ENCODE measurements at regions of chr1 and their contacts with region 1.

Region 1: DNA sequence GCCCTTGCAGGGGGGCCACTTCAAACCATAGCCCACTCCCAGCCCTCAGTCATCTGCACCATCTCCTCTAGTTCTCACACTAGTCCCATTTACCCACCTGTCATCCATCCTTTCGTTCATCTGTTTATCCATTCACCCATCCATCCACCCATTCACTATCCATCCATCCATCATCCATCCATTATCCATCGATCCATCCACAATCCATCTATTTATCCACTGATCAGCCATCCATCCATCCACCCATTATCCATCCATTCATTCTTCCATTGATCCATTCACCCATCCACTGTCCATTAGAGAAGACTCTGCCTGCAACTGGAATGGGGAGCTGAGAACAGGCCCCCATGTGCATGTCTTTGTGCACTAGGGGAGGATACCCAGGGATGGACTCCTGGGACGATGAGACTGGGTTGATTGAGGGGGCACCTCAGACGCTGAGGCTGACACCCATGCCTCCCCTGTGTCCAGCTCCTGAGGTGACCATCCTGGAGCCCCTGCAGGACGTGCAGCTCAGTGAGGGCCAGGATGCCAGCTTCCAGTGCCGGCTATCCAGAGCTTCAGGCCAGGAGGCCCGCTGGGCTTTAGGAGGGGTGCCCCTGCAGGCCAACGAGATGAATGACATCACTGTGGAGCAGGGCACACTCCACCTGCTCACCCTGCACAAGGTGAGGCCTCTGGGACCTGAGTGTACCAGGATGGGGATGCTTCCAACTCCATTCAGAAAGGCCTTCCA is 97.8 kb downstream of the TRIM11 start:
- DNase-seq: peak; percentile 33 to 52
- ATAC-seq: no peak
- H3K4me3 ChIP-seq: no peak overlapping the region
- H3K27ac ChIP-seq: no peak overlapping the region
- H3K4me1 ChIP-seq: no peaks in the 10 kb centered on the region
- H3K27me3 ChIP-seq: no peaks in the 10 kb centered on the region

Region 2: GRCh38 chr1:227844320-227845146 is 464.3 kb before region 1 on chr1:
- intact Hi-C with region 1: loop called in 1 of 2 experiments (anchors 5 kb)
- DNase-seq: no peak
- ATAC-seq: no peak
- H3K4me3 ChIP-seq: no peak overlapping the region
- H3K27ac ChIP-seq: no peak overlapping the region
- H3K4me1 ChIP-seq: no peaks in the 10 kb centered on the region
- H3K27me3 ChIP-seq: no peaks in the 10 kb centered on the region

Region 3: DNA sequence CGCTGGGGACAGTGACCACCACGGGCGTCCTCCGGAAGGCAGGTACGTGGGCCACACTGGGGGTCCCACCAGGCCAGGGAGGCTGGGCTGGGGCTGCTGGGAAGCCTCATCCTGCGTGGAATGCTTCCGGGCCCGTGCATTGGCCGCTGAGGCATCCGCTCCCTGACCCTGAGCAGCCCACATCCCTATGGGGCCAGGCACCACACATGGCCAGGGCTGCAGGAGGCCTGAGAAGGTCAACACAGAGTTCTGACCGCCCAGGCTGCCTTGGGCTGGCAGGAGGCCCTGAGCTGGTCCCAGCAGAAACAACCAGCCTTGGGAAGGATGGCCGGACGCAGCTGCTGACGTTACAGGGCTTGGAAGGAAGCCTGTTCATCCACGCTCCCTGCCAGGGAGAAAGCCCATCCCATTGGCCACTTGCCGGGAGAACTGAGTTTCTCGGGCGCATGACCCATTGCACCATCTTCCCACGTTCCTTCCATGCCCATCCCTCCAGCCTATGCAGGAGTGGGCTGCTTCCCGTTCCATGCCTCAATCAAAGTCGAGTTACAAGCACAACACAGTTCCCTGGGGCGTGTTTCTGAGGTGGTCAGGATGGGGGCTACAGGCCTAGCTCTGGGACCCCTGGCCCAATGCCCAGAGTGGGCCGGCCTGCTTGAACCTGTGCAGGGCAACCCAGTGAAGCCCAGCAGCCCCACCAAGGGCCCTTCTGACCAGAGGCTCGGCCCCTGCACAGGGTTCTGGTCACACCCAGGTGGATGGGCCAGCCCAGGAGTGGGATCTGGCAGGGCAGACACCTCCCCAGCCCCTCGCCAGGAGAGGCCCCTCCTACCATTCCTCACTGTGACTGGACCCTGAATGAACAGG is 66.1 kb after region 1 on chr1:
- intact Hi-C with region 1: no loop called
- DNase-seq: peak; percentile 90 to 94
- ATAC-seq: peak; percentile 67
- H3K4me3 ChIP-seq: no peak overlapping the region
- H3K27ac ChIP-seq: no peak overlapping the region
- H3K4me1 ChIP-seq: no peaks in the 10 kb centered on the region
- H3K27me3 ChIP-seq: no peaks in the 10 kb centered on the region

Region 4: GRCh38 chr1:228434686-228435085 is 125.9 kb after region 1 on chr1:
- intact Hi-C with region 1: no loop called
- DNase-seq: no peak
- ATAC-seq: no peak
- H3K4me3 ChIP-seq: no peak overlapping the region
- H3K27ac ChIP-seq: no peak overlapping the region
- H3K4me1 ChIP-seq: no peaks in the 10 kb centered on the region
- H3K27me3 ChIP-seq: no peaks in the 10 kb centered on the region

Measured in aorta (tissue), 5 donors.